ENCODE measurements at regions of chr9 and their contacts with region 1.

Region 1: DNA sequence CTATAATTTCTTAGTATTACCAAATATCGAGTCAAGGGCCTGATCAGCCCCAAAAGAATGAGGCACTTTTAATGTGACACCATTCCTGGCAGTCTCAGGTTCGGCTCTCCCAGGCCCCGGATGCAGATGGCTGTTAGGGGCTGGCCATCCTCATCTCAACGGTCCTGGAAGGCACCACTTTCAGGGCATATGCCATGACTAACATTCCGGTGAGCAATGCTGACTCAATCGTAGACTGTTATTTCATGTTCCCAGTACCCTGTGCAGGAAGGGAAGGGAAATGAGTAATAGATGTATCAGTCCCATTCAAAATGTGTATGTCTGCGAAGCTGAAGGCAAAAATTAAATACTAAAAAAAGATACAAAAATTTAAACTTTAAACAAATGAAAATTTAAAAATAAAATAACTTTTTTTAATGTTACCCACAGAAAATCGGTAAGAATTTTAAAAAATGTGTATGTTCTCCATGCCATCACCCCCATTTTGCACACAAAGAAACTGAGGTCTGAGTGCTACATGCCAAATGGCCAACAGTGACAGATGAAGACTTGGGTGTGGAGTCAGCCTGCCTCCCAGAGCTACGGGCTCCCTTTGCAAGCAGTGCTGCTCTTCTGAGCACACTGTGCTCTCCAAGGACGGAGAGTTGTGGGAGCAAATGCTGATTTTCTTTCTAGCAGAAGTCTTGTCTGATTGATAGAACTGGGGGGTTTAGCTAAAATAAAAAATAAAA is 79.0 kb downstream of the GLDC start:
- DNase-seq: peak; percentile 51 to 81 (median 69)
- H3K4me3 ChIP-seq: peak overlapping the region in 1 of 4 donors; percentile 19
- H3K27ac ChIP-seq: peak overlapping the region; percentile 68 to 86 (median 80)
- H3K4me1 ChIP-seq: peaks cover 7% of the 10 kb centered on the region in 2 donors
- H3K27me3 ChIP-seq: no peaks in the 10 kb centered on the region
- CTCF ChIP-seq: no peak
- POLR2A ChIP-seq: no peak

Region 2: DNA sequence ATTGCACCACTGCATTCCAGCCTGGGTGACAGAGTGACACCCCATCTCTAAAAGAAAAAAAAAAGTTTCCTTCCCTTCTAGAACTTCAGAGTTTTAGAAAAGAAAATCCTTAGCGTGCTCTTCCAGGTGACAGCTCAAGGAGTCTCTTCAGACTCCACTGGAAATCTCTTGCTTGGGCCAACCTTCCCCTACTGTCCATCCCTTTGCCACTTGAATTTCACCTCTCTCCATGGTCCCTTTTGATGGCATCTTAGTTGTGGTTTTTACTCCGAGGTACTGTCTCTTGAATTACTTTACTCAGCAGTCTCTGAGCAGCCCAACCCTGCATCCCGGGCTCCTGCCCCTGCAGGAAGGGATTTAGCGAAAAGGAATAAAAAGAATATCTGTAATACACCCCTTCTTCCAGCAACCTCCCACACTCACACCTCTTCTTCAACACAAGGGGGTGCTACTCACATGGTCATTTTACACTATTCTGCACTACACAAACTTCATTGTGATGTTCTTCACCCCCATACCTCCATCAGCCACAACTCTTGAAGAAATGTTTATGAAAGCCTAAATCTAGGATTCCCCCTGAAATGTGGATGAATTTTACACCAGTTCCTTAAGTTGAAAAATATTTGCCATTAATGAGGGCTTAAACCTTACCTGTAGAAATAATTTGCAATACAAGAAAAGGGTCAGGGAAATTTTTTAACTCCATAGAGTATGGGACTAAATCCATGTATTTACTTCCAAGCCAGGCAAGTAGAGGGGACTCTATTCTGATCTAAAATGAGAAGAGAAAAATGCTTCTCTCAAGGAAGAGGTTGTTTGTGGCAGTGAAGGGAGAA is 212.5 kb before region 1 on chr9:
- intact Hi-C with region 1: loop called (anchors 2 to 5 kb)
- DNase-seq: peak in 5 of 7 donors; percentile 19 to 29 (median 27)
- H3K4me3 ChIP-seq: no peak overlapping the region
- H3K27ac ChIP-seq: no peak overlapping the region
- H3K4me1 ChIP-seq: peaks cover 0 to 7% of the 10 kb centered on the region in 2 donors
- H3K27me3 ChIP-seq: no peaks in the 10 kb centered on the region
- CTCF ChIP-seq: peak; percentile 68 to 90 (median 84)
- POLR2A ChIP-seq: no peak

Region 3: GRCh38 chr9:6811436-6811835 is 244.9 kb after region 1 on chr9:
- intact Hi-C with region 1: no loop called
- DNase-seq: peak in 1 of 7 donors; percentile 18
- H3K4me3 ChIP-seq: no peak overlapping the region
- H3K27ac ChIP-seq: no peak overlapping the region
- H3K4me1 ChIP-seq: no peaks in the 10 kb centered on the region
- H3K27me3 ChIP-seq: no peaks in the 10 kb centered on the region
- CTCF ChIP-seq: no peak
- POLR2A ChIP-seq: no peak